CD8-positive, alpha-beta T cell (primary cell): ENCODE measurements at regions of chr19 and their contacts with region 1.

Region 1: GRCh38 chr19:28185646-28186045 is 1027.3 kb downstream of the UQCRFS1 start:
- DNase-seq: no peak
- ATAC-seq: no peak
- H3K4me3 ChIP-seq: no peak overlapping the region
- H3K4me3 Mint-ChIP-seq: no peak overlapping the region
- H3K27ac ChIP-seq: no peak overlapping the region
- H3K27ac Mint-ChIP-seq: no peak overlapping the region
- H3K4me1 ChIP-seq: no peaks in the 10 kb centered on the region
- H3K4me1 Mint-ChIP-seq: no peaks in the 10 kb centered on the region
- H3K27me3 ChIP-seq: no peaks in the 10 kb centered on the region
- H3K27me3 Mint-ChIP-seq: no peaks in the 10 kb centered on the region
- CTCF ChIP-seq: no peak

Region 2: GRCh38 chr19:28169168-28169887 is 16.3 kb before region 1 on chr19:
- CTCF ChIA-PET with region 1: no interaction called
- POLR2A ChIA-PET with region 1: no interaction called
- intact Hi-C with region 1: loop called in 1 of 2 experiments (anchors 1 kb)
- DNase-seq: no peak
- ATAC-seq: no peak
- H3K4me3 ChIP-seq: no peak overlapping the region
- H3K4me3 Mint-ChIP-seq: no peak overlapping the region
- H3K27ac ChIP-seq: no peak overlapping the region
- H3K27ac Mint-ChIP-seq: no peak overlapping the region
- H3K4me1 ChIP-seq: no peaks in the 10 kb centered on the region
- H3K4me1 Mint-ChIP-seq: no peaks in the 10 kb centered on the region
- H3K27me3 ChIP-seq: no peaks in the 10 kb centered on the region
- H3K27me3 Mint-ChIP-seq: peaks cover 2% of the 10 kb centered on the region
- CTCF ChIP-seq: no peak